Activated CD4-positive, alpha-beta T cell treated with anti-CD3 and anti-CD28 coated beads for 36 hours (primary cell): ENCODE measurements at regions of chr2 and their contacts with region 1.

Region 1: DNA sequence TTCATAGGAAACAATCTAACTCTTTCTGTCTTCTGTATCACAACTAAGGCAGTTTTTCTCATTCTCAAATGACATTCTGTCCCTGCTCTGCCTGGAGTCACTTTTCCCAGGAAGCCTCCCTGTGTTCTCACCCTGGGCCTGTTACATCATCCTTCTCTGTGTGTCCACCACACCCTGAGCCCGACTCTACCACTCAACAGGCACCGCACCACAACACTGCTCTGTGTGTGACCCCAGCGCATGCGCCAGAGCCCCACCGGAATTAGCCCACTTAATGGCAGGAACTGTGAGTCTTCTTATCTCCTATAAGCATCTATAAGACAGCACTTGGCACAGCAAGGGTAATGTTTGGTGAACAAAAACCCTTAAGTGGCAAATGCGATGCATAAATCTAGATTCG is 32.3 kb downstream of the TGFBRAP1 start:
- DNase-seq: no peak
- ATAC-seq: no peak
- H3K4me3 Mint-ChIP-seq: no peak overlapping the region
- H3K27ac Mint-ChIP-seq: no peak overlapping the region
- H3K4me1 Mint-ChIP-seq: peaks cover 8% of the 10 kb centered on the region
- H3K27me3 Mint-ChIP-seq: no peaks in the 10 kb centered on the region

Region 2: DNA sequence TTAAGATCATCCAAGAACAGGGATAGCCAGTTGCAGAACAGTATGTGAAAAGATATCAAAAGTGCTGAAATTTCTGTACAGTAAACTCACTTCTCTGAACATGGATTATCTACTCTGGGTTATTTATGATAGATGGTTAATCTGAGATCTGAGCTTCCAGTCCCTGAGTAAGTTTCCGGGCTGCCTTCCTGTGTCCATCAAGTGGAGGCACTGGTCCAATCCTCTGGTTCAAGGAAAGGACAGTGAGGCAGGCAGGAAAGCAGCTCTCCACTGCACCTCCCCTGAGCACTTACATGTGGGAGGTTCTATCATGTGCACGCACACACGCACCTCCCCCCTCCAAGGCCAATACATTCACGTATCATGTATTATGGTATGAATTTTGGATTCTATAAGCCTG is 23.2 kb before region 1 on chr2:
- CTCF ChIA-PET with region 1: no interaction called
- POLR2A ChIA-PET with region 1: no interaction called
- intact Hi-C with region 1: no loop called
- DNase-seq: no peak
- ATAC-seq: no peak
- H3K4me3 Mint-ChIP-seq: no peak overlapping the region
- H3K27ac Mint-ChIP-seq: no peak overlapping the region
- H3K4me1 Mint-ChIP-seq: no peaks in the 10 kb centered on the region
- H3K27me3 Mint-ChIP-seq: no peaks in the 10 kb centered on the region

Region 3: DNA sequence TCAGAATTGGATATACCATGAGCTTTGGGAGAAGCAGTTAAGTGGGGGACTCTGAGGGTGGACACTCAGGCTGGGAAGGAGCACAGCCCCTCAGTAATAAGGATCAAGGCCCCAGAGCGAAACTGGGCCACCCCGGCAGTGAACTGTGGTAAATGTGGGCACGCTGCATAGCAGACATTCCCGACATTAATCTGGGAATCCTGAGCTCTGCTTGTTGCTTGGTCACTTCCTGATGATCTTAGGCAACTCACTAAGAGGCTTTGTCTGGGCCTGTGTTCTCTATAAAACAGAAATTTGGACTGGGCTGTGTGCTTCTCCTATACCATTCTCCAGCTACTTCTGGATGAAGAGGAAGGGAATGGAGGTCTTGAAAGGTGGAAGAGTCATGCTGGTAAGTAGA is 27.5 kb after region 1 on chr2:
- CTCF ChIA-PET with region 1: interaction called, 4 read pairs
- POLR2A ChIA-PET with region 1: no interaction called
- intact Hi-C with region 1: loop called in 1 of 2 experiments (anchors 1 kb)
- DNase-seq: no peak
- ATAC-seq: no peak
- H3K4me3 Mint-ChIP-seq: no peak overlapping the region
- H3K27ac Mint-ChIP-seq: no peak overlapping the region
- H3K4me1 Mint-ChIP-seq: peaks cover 57% of the 10 kb centered on the region
- H3K27me3 Mint-ChIP-seq: no peaks in the 10 kb centered on the region